ENCODE measurements at regions of chr7 and their contacts with region 1.

Region 1: GRCh38 chr7:153381275-153382040 is 621.9 kb downstream of the ACTR3B start:
- DNase-seq: peak; percentile 0
- H3K4me3 ChIP-seq: no peak overlapping the region
- H3K27ac ChIP-seq: no peak overlapping the region
- H3K4me1 ChIP-seq: no peaks in the 10 kb centered on the region
- H3K27me3 ChIP-seq: no peaks in the 10 kb centered on the region
- CTCF ChIP-seq: peak; percentile 48 to 60

Region 2: DNA sequence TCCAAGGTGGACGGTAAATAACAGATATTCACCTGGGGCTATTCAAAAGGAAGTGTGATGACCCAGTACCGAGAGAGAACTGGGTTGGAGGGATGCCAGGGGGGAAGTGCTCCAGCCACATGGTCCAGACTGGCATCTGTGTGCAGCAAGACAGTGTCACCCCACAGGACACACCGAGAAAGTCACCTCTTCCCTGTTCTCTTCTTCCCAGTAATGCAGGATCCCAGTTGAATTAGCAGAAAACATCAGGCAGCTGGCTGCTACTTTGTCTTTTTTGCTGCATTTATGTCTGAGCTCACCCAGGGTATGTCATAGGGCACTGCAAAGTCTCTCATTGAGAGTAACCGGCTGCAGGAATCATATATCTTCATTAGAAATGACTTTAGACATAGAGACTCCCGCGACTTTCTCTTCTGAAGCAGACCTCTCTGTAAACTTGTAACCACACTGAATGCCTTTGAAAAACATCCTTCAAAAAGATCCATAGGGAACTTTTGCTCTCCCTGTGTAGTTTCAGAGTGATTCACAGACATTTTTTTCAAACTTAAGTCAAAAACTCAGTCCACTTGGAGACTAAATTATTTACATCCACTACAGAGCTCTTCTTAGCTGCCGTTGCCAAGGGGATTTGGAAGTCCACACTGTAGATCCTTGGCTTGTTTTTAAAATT is 61.7 kb after region 1 on chr7:
- CTCF ChIA-PET with region 1: no interaction called
- dilution Hi-C with region 1: loop called (anchors 5 kb)
- in situ Hi-C with region 1: no loop called
- intact Hi-C with region 1: no loop called
- DNase-seq: no peak
- H3K4me3 ChIP-seq: no peak overlapping the region
- H3K27ac ChIP-seq: no peak overlapping the region
- H3K4me1 ChIP-seq: no peaks in the 10 kb centered on the region
- H3K27me3 ChIP-seq: no peaks in the 10 kb centered on the region
- CTCF ChIP-seq: no peak

Region 3: DNA sequence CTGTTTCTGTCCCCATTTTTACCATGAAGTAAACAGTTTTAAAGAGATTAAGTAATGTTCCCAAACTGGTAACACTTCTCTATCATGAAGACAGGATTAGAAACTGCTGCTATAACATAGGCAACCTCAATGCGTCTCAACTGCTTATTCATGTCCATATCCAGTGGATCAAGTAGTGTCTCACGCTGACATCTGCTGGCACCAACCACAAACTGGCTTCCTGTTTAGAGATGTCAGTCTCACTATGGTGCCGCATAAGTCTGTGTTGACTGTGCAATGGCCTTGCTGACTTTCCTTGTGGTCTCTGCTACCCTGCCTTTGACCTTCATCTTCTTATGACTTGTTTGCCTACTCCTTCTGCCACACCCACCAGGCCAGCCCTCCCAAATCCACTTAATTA is 301.2 kb after region 1 on chr7:
- CTCF ChIA-PET with region 1: no interaction called
- dilution Hi-C with region 1: no loop called
- in situ Hi-C with region 1: no loop called
- intact Hi-C with region 1: loop called (anchors 1 kb)
- DNase-seq: no peak
- H3K4me3 ChIP-seq: no peak overlapping the region
- H3K27ac ChIP-seq: no peak overlapping the region
- H3K4me1 ChIP-seq: no peaks in the 10 kb centered on the region
- H3K27me3 ChIP-seq: no peaks in the 10 kb centered on the region
- CTCF ChIP-seq: no peak

Region 4: GRCh38 chr7:153808117-153808516 is 426.7 kb after region 1 on chr7:
- CTCF ChIA-PET with region 1: no interaction called
- dilution Hi-C with region 1: no loop called
- in situ Hi-C with region 1: no loop called
- intact Hi-C with region 1: no loop called
- DNase-seq: no peak
- H3K4me3 ChIP-seq: no peak overlapping the region
- H3K27ac ChIP-seq: no peak overlapping the region
- H3K4me1 ChIP-seq: no peaks in the 10 kb centered on the region
- H3K27me3 ChIP-seq: no peaks in the 10 kb centered on the region
- CTCF ChIP-seq: no peak

Measured in mammary epithelial cell (primary cell).